Endothelial cell of umbilical vein (primary cell): ENCODE measurements at regions of chr12 and their contacts with region 1.

Region 1: DNA sequence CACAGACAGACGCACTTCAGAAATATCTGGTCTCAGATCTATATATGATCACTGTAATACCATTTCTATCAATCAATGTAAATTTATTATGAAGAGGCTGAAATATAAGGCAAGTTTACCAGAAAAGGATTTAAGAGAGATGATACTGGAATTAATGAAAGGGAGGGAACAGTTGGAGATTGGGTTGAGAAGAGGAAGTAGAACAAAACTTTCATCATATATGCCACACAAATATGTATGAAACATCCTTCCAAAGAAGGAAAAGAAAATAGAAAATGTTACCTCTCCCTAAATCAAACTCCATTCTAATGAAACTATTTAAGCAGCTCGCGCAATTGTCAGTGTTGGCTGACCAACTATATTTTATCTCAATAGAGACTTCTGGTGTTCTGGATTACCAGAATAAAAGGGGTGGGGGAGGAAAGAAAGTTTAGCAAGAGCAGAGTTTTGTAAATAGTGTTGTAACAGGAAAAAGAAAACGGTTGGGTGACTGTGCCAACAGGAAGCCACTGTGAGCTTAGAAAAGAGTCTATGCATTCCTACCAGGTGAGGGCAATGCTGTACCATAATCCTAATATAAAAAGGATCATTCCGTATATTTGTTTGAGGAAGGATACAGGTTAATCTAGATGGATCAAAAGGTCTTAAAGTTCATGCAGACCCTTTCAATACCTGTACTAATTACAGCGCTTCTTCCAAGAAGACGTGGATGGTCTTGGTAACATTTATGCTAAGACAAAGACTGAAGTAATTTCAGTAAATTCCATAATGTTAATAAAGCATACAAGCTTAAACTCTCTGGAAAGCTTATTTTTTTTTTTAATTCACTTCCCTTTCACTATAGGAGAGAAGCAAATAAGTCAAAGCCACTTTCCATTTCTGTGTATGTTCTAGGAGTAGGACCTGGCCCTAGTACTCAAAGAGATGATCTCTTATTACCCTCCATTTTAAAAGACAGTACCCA is 14.5 kb upstream of the LLPH start:
- DNase-seq: peak; percentile 88
- H3K4me3 ChIP-seq: peak overlapping the region in 1 of 3 experiments; percentile 46
- H3K27ac ChIP-seq: peak overlapping the region; percentile 62
- H3K4me1 ChIP-seq: peaks cover 20% of the 10 kb centered on the region
- H3K27me3 ChIP-seq: no peaks in the 10 kb centered on the region
- CTCF ChIP-seq: peak; percentile 59 to 62
- POLR2A ChIP-seq: peak; percentile 23

Region 2: GRCh38 chr12:65279369-65280112 is 865.5 kb before region 1 on chr12:
- CTCF ChIA-PET with region 1: no interaction called
- POLR2A ChIA-PET with region 1: no interaction called
- dilution Hi-C with region 1: no loop called
- intact Hi-C with region 1: no loop called
- DNase-seq: peak; percentile 70
- H3K4me3 ChIP-seq: peak overlapping the region; percentile 63 to 95 (median 90)
- H3K27ac ChIP-seq: peak overlapping the region; percentile 94
- H3K4me1 ChIP-seq: peaks cover 24% of the 10 kb centered on the region
- H3K27me3 ChIP-seq: no peaks in the 10 kb centered on the region
- CTCF ChIP-seq: no peak
- POLR2A ChIP-seq: no peak

Region 3: DNA sequence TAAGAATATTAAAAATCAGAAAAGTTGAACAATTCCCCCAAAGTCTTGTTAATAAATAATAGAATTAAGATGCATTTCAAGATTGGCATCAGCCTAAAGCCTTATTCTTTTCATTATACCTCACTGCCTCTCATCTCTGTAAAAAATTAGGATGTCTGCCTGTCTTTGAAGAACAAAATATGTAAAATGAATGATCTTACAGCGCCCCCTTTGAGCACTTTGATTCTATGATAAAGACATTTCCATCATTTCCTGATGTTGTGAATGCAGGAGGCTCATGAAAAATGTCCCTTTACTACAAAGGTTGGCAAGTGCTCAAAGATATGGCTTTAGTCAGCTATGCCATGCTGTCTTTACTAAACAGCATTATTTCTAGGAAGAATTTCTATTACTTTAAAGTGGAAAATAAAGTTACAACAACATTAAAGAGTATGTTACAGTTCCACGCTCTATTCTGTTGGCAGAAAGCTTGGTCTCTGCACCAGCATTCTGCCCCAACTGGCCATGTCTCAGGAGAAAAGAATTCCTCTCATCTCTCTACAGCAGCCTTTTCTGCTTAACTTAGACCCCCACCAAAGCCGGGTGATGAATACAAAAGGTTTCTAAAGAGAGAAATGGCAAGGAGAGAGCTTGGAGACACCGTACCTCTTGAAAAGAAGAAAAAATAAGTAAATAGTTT is 109.6 kb before region 1 on chr12:
- CTCF ChIA-PET with region 1: no interaction called
- POLR2A ChIA-PET with region 1: no interaction called
- dilution Hi-C with region 1: no loop called
- intact Hi-C with region 1: no loop called
- DNase-seq: peak; percentile 71
- H3K4me3 ChIP-seq: no peak overlapping the region
- H3K27ac ChIP-seq: no peak overlapping the region
- H3K4me1 ChIP-seq: peaks cover 10% of the 10 kb centered on the region
- H3K27me3 ChIP-seq: peaks cover 1 to 3% of the 10 kb centered on the region in 2 experiments
- CTCF ChIP-seq: peak; percentile 26 to 35
- POLR2A ChIP-seq: no peak

Region 4: DNA sequence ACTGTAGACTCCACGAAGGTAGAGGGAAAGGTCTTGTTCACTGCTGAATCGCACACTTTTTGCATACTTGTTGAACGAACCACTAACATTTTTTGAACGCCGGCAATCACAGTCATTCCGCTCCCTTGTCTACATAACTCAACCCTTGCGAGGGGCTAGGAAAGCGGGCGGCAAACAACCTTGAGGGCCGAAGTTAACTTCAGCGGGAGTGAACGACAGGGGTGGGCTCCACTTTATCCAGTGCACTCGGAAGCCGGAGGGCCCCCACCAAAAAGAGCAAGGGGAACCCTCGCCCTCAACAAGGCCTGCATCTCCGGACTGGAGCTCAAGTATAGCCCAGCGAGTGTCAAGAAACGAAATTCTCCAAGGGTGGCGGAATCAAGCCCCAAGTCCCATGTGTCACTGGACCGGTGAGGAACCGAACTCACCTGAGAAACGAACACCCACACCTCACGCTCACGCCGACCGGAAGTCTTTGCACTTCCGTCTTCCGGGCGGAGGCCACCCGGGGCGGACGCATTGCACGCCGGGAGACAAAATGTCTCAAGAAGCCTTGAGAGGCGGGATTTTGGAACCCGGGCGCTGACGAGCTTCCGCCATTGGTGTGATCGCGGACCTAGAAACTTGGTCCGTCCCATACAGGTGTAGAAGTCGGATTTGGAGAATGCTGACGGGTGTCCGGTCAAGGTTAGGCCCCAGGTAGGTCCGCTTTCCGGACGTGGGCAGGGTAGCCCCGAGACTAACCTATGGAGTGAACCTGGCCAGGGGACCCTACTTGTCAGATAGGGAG is 14.6 kb before region 1 on chr12 and contains the start of gene LLPH:
- CTCF ChIA-PET with region 1: interaction called, 24 read pairs
- POLR2A ChIA-PET with region 1: no interaction called
- dilution Hi-C with region 1: no loop called
- intact Hi-C with region 1: no loop called
- DNase-seq: peak; percentile 80
- H3K4me3 ChIP-seq: peak within 1 kb of the TSS; percentile 68 to 85 (median 82)
- H3K27ac ChIP-seq: peak within 1 kb of the TSS; percentile 67
- H3K4me1 ChIP-seq: peaks cover 16% of the 10 kb centered on the region
- H3K27me3 ChIP-seq: no peaks in the 10 kb centered on the region
- CTCF ChIP-seq: no peak
- POLR2A ChIP-seq: peak; percentile 82
- total RNA-seq, gene LLPH: 34.0 and 35.6 TPM in 2 replicates

Region 5: GRCh38 chr12:66176105-66176900 is 31.2 kb after region 1 on chr12:
- CTCF ChIA-PET with region 1: interaction called, 15 read pairs
- POLR2A ChIA-PET with region 1: interaction called, 3 read pairs
- dilution Hi-C with region 1: no loop called
- intact Hi-C with region 1: no loop called
- DNase-seq: peak; percentile 75
- H3K4me3 ChIP-seq: no peak overlapping the region
- H3K27ac ChIP-seq: no peak overlapping the region
- H3K4me1 ChIP-seq: peaks cover 12% of the 10 kb centered on the region
- H3K27me3 ChIP-seq: no peaks in the 10 kb centered on the region
- CTCF ChIP-seq: no peak
- POLR2A ChIP-seq: no peak

Region 6: DNA sequence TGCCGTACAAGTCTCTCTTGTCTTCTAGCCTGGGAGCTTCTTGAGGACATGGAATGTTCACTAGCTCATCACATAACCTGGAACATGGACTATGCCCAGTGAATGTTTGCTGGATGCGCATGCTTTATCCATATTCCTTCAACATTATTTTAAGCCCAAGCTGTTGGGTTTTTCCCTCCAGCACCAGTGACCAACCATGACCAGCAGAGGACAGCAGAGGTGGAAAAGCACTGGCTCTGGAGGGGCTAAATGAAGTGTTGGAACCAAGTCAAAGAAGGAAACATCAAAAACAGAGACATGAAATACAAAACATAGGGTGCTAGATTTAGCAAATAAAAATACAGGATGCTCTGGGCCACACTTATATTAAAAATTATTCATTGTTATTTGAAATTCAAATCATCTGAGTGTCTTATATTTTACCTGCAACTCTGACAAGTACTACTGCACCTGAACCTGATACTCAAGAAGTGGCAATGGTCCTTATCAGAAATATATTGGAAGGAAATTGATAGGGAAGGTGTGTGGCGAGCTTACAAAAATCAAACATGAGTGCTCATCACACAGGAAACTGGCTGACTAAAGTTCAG is 134.1 kb after region 1 on chr12:
- CTCF ChIA-PET with region 1: interaction called, 26 read pairs
- POLR2A ChIA-PET with region 1: no interaction called
- dilution Hi-C with region 1: no loop called
- intact Hi-C with region 1: no loop called
- DNase-seq: peak; percentile 48
- H3K4me3 ChIP-seq: no peak overlapping the region
- H3K27ac ChIP-seq: no peak overlapping the region
- H3K4me1 ChIP-seq: peaks cover 2% of the 10 kb centered on the region
- H3K27me3 ChIP-seq: no peaks in the 10 kb centered on the region
- CTCF ChIP-seq: peak; percentile 63 to 69
- POLR2A ChIP-seq: no peak

Region 7: DNA sequence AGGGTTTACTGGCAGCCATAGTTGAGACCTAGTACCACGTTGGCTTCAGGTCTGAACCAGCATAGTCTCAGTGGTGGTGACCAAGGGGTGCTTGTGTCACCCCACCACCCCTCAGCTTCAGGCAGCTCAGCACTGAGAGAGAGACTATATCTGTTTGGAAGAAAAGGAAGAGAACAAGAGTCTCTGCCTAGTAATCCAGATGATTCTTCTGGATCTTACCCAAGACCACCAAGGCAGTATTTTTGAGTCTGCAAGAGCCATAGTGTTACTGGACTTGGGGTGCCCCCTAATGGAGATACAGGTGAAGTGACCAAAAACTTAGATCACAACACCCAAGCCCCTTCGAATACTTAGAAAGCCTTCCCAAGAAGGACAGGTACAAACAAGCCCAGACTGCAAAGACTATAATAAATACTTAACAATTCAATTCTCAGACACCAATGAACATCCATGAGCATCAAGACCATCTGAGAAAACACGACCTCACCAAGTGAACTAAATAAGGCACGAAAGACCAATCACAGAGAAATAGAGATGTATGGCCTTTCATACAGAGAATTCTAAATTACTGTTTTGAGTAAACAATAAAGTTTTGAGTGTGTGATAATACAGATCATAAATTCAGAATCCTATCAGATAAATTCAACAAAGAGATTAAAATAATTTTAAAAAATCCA is 264.3 kb after region 1 on chr12:
- CTCF ChIA-PET with region 1: interaction called, 24 read pairs
- POLR2A ChIA-PET with region 1: no interaction called
- dilution Hi-C with region 1: no loop called
- intact Hi-C with region 1: loop called (anchors 1 kb)
- DNase-seq: peak; percentile 69
- H3K4me3 ChIP-seq: no peak overlapping the region
- H3K27ac ChIP-seq: no peak overlapping the region
- H3K4me1 ChIP-seq: peaks cover 11% of the 10 kb centered on the region
- H3K27me3 ChIP-seq: no peaks in the 10 kb centered on the region
- CTCF ChIP-seq: peak; percentile 58 to 70
- POLR2A ChIP-seq: no peak

Region 8: DNA sequence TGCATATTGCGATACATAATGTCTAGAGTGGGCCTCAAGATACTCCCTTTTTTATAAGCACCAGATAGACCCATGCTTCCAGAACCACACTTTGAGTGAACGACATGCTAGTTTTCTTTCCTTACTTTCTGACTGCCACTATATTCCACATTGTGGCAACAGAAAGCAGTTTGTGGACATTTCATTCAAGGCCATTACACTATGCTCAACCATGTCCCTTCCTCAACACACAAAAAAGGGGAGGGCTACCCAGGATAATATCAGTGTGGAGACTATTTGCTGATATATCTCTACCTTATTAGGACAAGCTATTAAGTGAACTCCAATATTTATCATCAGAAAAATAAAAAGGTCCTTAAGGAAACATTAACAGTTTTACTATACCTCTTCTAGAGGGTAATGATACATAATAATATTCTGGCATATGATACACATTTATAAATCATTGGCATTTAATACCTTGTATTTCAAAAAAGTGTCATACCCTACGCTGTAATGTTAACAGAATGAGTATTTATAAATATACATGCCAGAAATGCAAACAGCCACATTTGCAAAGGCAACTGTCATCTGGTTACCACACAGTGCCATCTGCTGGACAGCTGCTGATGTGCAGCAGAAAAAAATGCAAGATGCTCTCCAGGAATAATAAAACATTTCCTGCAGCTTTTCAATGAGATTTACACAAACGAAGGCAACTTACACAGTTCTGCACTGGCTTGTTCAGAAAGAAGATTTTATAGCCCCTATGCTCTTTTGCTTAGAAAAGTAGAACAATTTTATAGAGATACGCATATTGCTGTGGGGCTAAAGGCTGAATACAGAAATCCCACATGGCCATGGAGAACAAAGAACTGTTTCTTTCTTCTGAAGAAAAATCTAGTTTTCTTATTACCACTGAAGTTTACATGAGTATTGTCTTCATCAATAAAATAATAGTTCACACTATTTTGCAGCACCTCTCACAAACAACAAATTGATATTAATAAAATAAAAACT is 716.0 kb after region 1 on chr12:
- CTCF ChIA-PET with region 1: interaction called, 4 read pairs
- POLR2A ChIA-PET with region 1: no interaction called
- dilution Hi-C with region 1: no loop called
- intact Hi-C with region 1: loop called (anchors 1 kb)
- DNase-seq: peak; percentile 79
- H3K4me3 ChIP-seq: no peak overlapping the region
- H3K27ac ChIP-seq: no peak overlapping the region
- H3K4me1 ChIP-seq: no peaks in the 10 kb centered on the region
- H3K27me3 ChIP-seq: no peaks in the 10 kb centered on the region
- CTCF ChIP-seq: peak; percentile 78 to 87
- POLR2A ChIP-seq: no peak